HCT116 (cell line): ENCODE measurements at regions of chr12 and their contacts with region 1.

Region 1: GRCh38 chr12:12334367-12335040 is 15.5 kb downstream of the MANSC1 start:
- DNase-seq: peak; percentile 47
- ATAC-seq: peak; percentile 94
- H3K4me3 ChIP-seq: no peak overlapping the region
- H3K27ac ChIP-seq: no peak overlapping the region
- H3K4me1 ChIP-seq: peaks cover 0 to 14% of the 10 kb centered on the region in 2 experiments; a peak in 1 of 4 replicates
- H3K27me3 ChIP-seq: no peaks in the 10 kb centered on the region
- CTCF ChIP-seq: peak; percentile 80 to 96 (median 85)
- POLR2A ChIP-seq: no peak
- RAD21 ChIP-seq: peak; percentile 69

Region 2: GRCh38 chr12:12081836-12082497 is 252.5 kb before region 1 on chr12:
- CTCF ChIA-PET with region 1: interaction called, 8 read pairs
- POLR2A ChIA-PET with region 1: no interaction called
- RAD21 ChIA-PET with region 1: interaction called in 1 of 2 experiments, 4 read pairs
- intact Hi-C with region 1: loop called (anchors 1 kb)
- DNase-seq: peak; percentile 29
- ATAC-seq: peak; percentile 93
- H3K4me3 ChIP-seq: no peak overlapping the region
- H3K27ac ChIP-seq: no peak overlapping the region
- H3K4me1 ChIP-seq: peaks cover 0 to 5% of the 10 kb centered on the region in 2 experiments; a peak in 1 of 4 replicates
- H3K27me3 ChIP-seq: no peaks in the 10 kb centered on the region
- CTCF ChIP-seq: peak; percentile 21 to 76 (median 42); a peak in 5 of 6 replicates
- POLR2A ChIP-seq: no peak
- RAD21 ChIP-seq: peak; percentile 83